ENCODE measurements at regions of chr18 and their contacts with region 1.

Region 1: GRCh38 chr18:33184958-33185357 is 255.6 kb downstream of the CCDC178 start:
- DNase-seq: no peak
- H3K4me3 ChIP-seq: no peak overlapping the region
- H3K27ac ChIP-seq: no peak overlapping the region
- H3K4me1 ChIP-seq: no peaks in the 10 kb centered on the region
- H3K27me3 ChIP-seq: no peaks in the 10 kb centered on the region
- CTCF ChIP-seq: no peak
- EP300 ChIP-seq: no peak
- POLR2A ChIP-seq: no peak

Region 2: GRCh38 chr18:32919799-32920198 is 265.2 kb before region 1 on chr18:
- in situ Hi-C with region 1: no loop called
- intact Hi-C with region 1: no loop called
- DNase-seq: peak; percentile 8
- H3K4me3 ChIP-seq: no peak overlapping the region
- H3K27ac ChIP-seq: no peak overlapping the region
- H3K4me1 ChIP-seq: no peaks in the 10 kb centered on the region
- H3K27me3 ChIP-seq: no peaks in the 10 kb centered on the region
- CTCF ChIP-seq: peak in 2 of 5 experiments; percentile 4 to 6
- EP300 ChIP-seq: no peak
- POLR2A ChIP-seq: no peak

Region 3: GRCh38 chr18:33076601-33077000 is 108.4 kb before region 1 on chr18:
- in situ Hi-C with region 1: no loop called
- intact Hi-C with region 1: no loop called
- DNase-seq: no peak
- H3K4me3 ChIP-seq: no peak overlapping the region
- H3K27ac ChIP-seq: no peak overlapping the region
- H3K4me1 ChIP-seq: no peaks in the 10 kb centered on the region
- H3K27me3 ChIP-seq: no peaks in the 10 kb centered on the region
- CTCF ChIP-seq: no peak
- EP300 ChIP-seq: no peak
- POLR2A ChIP-seq: no peak

Region 4: GRCh38 chr18:33128581-33128980 is 56.4 kb before region 1 on chr18:
- in situ Hi-C with region 1: no loop called
- intact Hi-C with region 1: loop called (anchors 10 kb)
- DNase-seq: no peak
- H3K4me3 ChIP-seq: no peak overlapping the region
- H3K27ac ChIP-seq: no peak overlapping the region
- H3K4me1 ChIP-seq: no peaks in the 10 kb centered on the region
- H3K27me3 ChIP-seq: no peaks in the 10 kb centered on the region
- CTCF ChIP-seq: no peak
- EP300 ChIP-seq: no peak
- POLR2A ChIP-seq: no peak

Region 5: GRCh38 chr18:33330711-33331110 is 145.8 kb after region 1 on chr18:
- in situ Hi-C with region 1: no loop called
- intact Hi-C with region 1: no loop called
- DNase-seq: no peak
- H3K4me3 ChIP-seq: no peak overlapping the region
- H3K27ac ChIP-seq: no peak overlapping the region
- H3K4me1 ChIP-seq: no peaks in the 10 kb centered on the region
- H3K27me3 ChIP-seq: no peaks in the 10 kb centered on the region
- CTCF ChIP-seq: no peak
- EP300 ChIP-seq: no peak
- POLR2A ChIP-seq: no peak

Measured in transverse colon (tissue), 4 donors.